ENCODE measurements at regions of chr12 and their contacts with region 1.

Region 1: GRCh38 chr12:100741084-100741711 is 53.4 kb upstream of the ANO4 start:
- DNase-seq: peak; percentile 8
- H3K4me3 Mint-ChIP-seq: no peak overlapping the region
- H3K27ac Mint-ChIP-seq: no peak overlapping the region
- H3K4me1 Mint-ChIP-seq: no peaks in the 10 kb centered on the region
- H3K27me3 Mint-ChIP-seq: peaks cover 6% of the 10 kb centered on the region

Region 2: DNA sequence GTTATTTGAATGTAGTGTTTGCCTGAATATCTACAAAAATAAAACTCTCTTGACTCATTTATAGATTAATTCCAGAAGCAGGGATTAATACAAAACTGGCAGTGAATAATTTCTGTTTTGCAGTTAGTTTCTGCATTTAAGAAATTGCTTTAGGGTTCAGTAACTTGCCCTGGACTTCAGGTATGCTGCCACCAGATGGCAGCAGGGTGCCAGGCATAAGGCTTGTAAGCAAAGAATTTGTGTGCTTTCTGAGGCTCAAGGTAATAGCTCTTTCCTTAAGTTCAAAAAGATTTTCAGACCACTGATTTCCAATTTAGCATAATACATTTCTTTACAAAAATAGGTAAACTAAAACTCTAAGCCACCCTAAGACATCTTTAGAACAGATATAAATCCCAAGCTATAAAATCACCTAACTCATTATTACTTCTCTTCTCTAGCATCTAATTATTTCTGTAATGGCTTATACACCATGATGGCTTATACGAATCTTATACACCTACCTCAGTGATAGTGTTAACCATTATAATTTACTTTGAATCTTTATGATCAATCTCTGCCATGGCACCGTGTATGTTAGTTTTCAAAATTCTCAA is 1697.8 kb before region 1 on chr12:
- CTCF ChIA-PET with region 1: no interaction called
- intact Hi-C with region 1: loop called (anchors 10 kb)
- DNase-seq: peak; percentile 63
- H3K4me3 Mint-ChIP-seq: no peak overlapping the region
- H3K27ac Mint-ChIP-seq: no peak overlapping the region
- H3K4me1 Mint-ChIP-seq: no peaks in the 10 kb centered on the region
- H3K27me3 Mint-ChIP-seq: peaks cover 9% of the 10 kb centered on the region

Region 3: GRCh38 chr12:100154474-100155247 is 586.5 kb before region 1 on chr12:
- CTCF ChIA-PET with region 1: no interaction called
- intact Hi-C with region 1: loop called (anchors 5 kb)
- DNase-seq: peak; percentile 79
- H3K4me3 Mint-ChIP-seq: no peak overlapping the region
- H3K27ac Mint-ChIP-seq: no peak overlapping the region
- H3K4me1 Mint-ChIP-seq: peaks cover 6% of the 10 kb centered on the region
- H3K27me3 Mint-ChIP-seq: no peaks in the 10 kb centered on the region

Region 4: DNA sequence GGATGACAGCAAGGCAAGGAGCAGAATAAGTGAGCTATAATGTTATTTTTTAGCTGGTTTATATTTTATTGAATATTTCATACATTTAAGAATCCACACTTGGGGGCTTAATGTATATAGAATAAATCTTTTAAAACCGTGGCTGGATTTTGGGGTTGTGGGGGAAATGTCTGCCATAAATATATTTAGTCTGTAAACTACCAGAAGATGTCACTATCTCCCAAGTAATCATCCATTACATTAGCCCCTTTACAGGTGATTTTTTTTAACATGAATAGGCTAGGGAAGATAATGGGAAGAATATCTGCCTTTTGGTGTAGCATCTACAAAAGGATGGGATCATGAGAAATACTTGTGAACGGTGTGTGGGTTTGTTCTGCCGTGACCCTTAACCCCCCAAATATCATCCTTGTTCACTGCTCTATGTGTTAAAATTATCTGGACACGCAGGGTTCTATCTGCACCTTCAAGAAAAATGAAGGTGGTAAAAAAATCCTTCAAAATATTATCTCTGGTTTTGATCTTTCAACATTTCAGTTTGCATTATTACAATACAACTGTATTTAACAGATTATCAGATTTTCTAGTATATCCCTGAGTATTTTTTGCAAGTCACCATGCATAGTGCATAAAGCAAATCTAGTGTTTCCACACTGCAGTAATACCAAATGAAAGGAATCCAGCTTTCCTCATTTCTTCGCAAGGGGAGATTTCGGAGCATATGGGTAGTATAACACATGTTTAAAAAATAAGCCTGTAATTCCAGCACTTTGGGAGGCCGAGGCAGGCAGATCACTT is 392.3 kb before region 1 on chr12:
- CTCF ChIA-PET with region 1: interaction called, 4 read pairs
- intact Hi-C with region 1: loop called (anchors 5 kb)
- DNase-seq: no peak
- H3K4me3 Mint-ChIP-seq: no peak overlapping the region
- H3K27ac Mint-ChIP-seq: no peak overlapping the region
- H3K4me1 Mint-ChIP-seq: no peaks in the 10 kb centered on the region
- H3K27me3 Mint-ChIP-seq: no peaks in the 10 kb centered on the region

Region 5: GRCh38 chr12:100453951-100454350 is 287.2 kb before region 1 on chr12:
- CTCF ChIA-PET with region 1: no interaction called
- intact Hi-C with region 1: no loop called
- DNase-seq: no peak
- H3K4me3 Mint-ChIP-seq: no peak overlapping the region
- H3K27ac Mint-ChIP-seq: no peak overlapping the region
- H3K4me1 Mint-ChIP-seq: no peaks in the 10 kb centered on the region
- H3K27me3 Mint-ChIP-seq: peaks cover 6% of the 10 kb centered on the region

Region 6: DNA sequence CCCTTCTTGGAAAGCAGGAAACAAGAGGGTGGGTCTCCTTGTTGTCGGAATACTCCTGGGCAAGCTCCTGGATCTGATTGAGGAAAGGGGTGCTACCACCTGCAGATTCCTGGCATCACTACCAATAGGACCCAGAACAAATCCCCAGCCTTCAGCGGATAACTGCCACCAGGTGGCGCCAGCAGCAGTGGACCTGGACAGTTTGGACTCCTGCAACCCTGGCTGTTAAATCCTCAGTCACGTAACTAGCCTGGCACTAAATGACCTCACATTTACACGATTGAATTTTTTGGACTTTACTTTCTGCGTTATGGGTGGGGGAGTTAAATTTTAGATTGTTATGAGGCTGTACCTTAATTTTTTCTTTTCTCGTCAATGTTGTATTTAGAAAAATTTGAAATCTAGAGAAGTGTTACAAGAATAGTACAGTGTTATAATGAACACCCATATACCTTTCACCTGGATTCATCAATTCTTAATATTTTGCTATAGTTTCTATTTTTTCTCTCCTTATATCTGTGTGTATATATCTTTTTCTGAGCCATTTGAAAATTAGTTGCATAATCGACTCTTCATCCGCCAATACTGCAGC is 72.2 kb before region 1 on chr12:
- CTCF ChIA-PET with region 1: interaction called, 6 read pairs
- intact Hi-C with region 1: loop called (anchors 1 kb)
- DNase-seq: peak; percentile 70
- H3K4me3 Mint-ChIP-seq: no peak overlapping the region
- H3K27ac Mint-ChIP-seq: no peak overlapping the region
- H3K4me1 Mint-ChIP-seq: no peaks in the 10 kb centered on the region
- H3K27me3 Mint-ChIP-seq: peaks cover 9% of the 10 kb centered on the region

Region 7: DNA sequence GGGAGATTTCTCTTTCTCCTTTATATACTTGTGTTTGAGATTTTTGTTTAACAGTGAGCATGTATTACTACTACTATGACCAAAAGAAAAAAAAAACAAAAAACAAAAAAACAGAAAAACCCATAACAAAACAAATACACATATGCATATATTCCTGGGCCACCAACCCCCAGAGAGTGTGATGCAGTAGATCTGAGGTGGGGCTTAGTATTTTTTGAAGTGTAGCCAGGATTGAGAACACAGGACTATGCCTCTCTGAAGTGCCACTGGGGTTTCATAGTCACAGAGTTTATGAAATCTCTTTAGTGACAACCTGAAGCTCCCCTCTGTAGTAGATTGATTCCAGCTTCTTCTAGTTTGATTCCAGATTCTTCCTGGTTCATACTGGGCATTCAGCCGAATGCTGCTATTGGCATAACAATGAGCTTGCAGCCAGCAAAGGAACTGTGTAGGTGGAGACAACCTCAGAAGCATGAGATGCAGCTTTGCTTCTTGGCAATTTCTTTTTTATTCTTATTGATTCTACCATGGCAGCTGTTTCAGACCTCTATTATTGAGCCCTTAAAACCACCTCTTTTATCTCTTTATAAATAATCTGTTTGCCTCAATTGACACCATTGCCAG is 37.9 kb after region 1 on chr12:
- CTCF ChIA-PET with region 1: no interaction called
- intact Hi-C with region 1: no loop called
- DNase-seq: no peak
- H3K4me3 Mint-ChIP-seq: no peak overlapping the region
- H3K27ac Mint-ChIP-seq: no peak overlapping the region
- H3K4me1 Mint-ChIP-seq: no peaks in the 10 kb centered on the region
- H3K27me3 Mint-ChIP-seq: no peaks in the 10 kb centered on the region

Measured in activated naive CD4-positive, alpha-beta T cell treated with anti-CD3 and anti-CD28 coated beads for 36 hours (primary cell).